ENCODE measurements at regions of chr11 and their contacts with region 1.

Region 1: DNA sequence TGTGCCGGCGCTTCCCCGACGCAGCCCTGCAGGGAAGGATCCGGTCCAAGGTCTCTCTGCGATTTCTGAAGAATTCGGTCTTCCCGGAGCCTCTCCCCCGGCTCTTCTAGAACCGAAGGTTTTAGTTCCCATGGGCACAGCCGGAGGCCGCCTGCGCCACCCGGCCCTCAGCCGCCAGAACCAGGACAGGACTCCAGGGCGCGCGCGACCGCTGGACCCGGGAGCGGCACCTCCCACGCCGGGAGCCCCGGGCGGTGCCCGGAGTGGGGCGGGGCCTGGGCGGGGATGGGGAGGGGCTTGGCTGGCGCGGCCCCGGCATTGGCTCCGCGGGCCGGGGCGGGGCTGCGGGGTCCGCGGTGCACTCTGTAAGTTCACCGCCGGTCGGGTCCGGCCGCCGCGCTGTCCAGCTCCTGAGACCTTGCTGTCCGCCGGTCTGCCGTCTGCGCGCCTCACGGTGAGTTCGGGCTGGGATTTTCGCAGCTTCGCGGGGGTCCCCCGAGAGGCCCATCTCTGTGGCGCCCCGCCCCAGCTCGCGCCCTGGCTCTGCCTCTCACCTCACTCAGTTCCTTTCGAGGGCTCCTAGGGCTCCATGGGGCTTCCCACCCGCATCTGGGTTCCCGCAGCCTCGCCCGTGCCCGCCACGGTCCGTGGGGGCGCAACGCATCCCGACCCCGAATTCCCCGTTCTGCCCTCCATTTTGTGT is at the start of gene CDC42EP2:
- DNase-seq: peak; percentile 54 to 82
- ATAC-seq: peak; percentile 90 to 92 (median 91)
- H3K4me3 ChIP-seq: peak within 1 kb of the TSS; percentile 75
- H3K4me3 Mint-ChIP-seq: peak within 1 kb of the TSS; percentile 81
- H3K27ac ChIP-seq: no peak within 1 kb of the TSS
- H3K27ac Mint-ChIP-seq: peak within 1 kb of the TSS in 1 of 2 donors; percentile 42
- H3K4me1 ChIP-seq: peaks cover 21% of the 10 kb centered on the region
- H3K4me1 Mint-ChIP-seq: peaks cover 0 to 5% of the 10 kb centered on the region in 2 donors
- H3K27me3 ChIP-seq: no peaks in the 10 kb centered on the region
- H3K27me3 Mint-ChIP-seq: peaks cover 0 to 12% of the 10 kb centered on the region in 2 donors
- CTCF ChIP-seq: no peak
- total RNA-seq, gene CDC42EP2: 1.4 to 1.5 (median 1.5) TPM

Region 2: GRCh38 chr11:65204646-65205601 is 109.7 kb before region 1 on chr11:
- intact Hi-C with region 1: loop called (anchors 1 kb)
- DNase-seq: peak; percentile 57 to 70
- ATAC-seq: peak; percentile 78 to 82 (median 78)
- H3K4me3 ChIP-seq: no peak overlapping the region
- H3K4me3 Mint-ChIP-seq: no peak overlapping the region
- H3K27ac ChIP-seq: no peak overlapping the region
- H3K27ac Mint-ChIP-seq: no peak overlapping the region
- H3K4me1 ChIP-seq: peaks cover 2% of the 10 kb centered on the region
- H3K4me1 Mint-ChIP-seq: peaks cover 11% of the 10 kb centered on the region in 2 donors
- H3K27me3 ChIP-seq: no peaks in the 10 kb centered on the region
- H3K27me3 Mint-ChIP-seq: no peaks in the 10 kb centered on the region
- CTCF ChIP-seq: peak; percentile 96

Region 3: GRCh38 chr11:65274735-65275682 is 39.6 kb before region 1 on chr11:
- intact Hi-C with region 1: loop called (anchors 1 kb)
- DNase-seq: peak in 1 of 2 donors; percentile 65
- ATAC-seq: peak in 2 of 3 donors; percentile 62 to 63
- H3K4me3 ChIP-seq: no peak overlapping the region
- H3K4me3 Mint-ChIP-seq: no peak overlapping the region
- H3K27ac ChIP-seq: no peak overlapping the region
- H3K27ac Mint-ChIP-seq: no peak overlapping the region
- H3K4me1 ChIP-seq: no peaks in the 10 kb centered on the region
- H3K4me1 Mint-ChIP-seq: no peaks in the 10 kb centered on the region
- H3K27me3 ChIP-seq: no peaks in the 10 kb centered on the region
- H3K27me3 Mint-ChIP-seq: no peaks in the 10 kb centered on the region
- CTCF ChIP-seq: peak; percentile 44